H1 (cell line): ENCODE measurements at regions of chr6 and their contacts with region 1.

Region 1: GRCh38 chr6:24547243-24547642 is 52.5 kb downstream of the ALDH5A1 start:
- DNase-seq: peak; percentile 31 to 54
- H3K4me3 ChIP-seq: no peak overlapping the region
- H3K27ac ChIP-seq: no peak overlapping the region
- H3K4me1 ChIP-seq: no peaks in the 10 kb centered on the region
- H3K27me3 ChIP-seq: no peaks in the 10 kb centered on the region
- CTCF ChIP-seq: peak; percentile 39 to 50 (median 46); a peak in 3 of 4 replicates
- EP300 ChIP-seq: no peak
- POLR2A ChIP-seq: no peak
- RAD21 ChIP-seq: peak; percentile 62 to 73

Region 2: GRCh38 chr6:23633986-23634385 is 913.3 kb before region 1 on chr6:
- CTCF ChIA-PET with region 1: no interaction called
- POLR2A ChIA-PET with region 1: no interaction called
- DNase-seq: no peak
- H3K4me3 ChIP-seq: no peak overlapping the region
- H3K27ac ChIP-seq: no peak overlapping the region
- H3K4me1 ChIP-seq: no peaks in the 10 kb centered on the region
- H3K27me3 ChIP-seq: peaks cover 0 to 2% (median 0%) of the 10 kb centered on the region in 4 experiments; a peak in 1 of 7 replicates
- CTCF ChIP-seq: no peak
- EP300 ChIP-seq: no peak
- POLR2A ChIP-seq: no peak
- RAD21 ChIP-seq: no peak

Region 3: DNA sequence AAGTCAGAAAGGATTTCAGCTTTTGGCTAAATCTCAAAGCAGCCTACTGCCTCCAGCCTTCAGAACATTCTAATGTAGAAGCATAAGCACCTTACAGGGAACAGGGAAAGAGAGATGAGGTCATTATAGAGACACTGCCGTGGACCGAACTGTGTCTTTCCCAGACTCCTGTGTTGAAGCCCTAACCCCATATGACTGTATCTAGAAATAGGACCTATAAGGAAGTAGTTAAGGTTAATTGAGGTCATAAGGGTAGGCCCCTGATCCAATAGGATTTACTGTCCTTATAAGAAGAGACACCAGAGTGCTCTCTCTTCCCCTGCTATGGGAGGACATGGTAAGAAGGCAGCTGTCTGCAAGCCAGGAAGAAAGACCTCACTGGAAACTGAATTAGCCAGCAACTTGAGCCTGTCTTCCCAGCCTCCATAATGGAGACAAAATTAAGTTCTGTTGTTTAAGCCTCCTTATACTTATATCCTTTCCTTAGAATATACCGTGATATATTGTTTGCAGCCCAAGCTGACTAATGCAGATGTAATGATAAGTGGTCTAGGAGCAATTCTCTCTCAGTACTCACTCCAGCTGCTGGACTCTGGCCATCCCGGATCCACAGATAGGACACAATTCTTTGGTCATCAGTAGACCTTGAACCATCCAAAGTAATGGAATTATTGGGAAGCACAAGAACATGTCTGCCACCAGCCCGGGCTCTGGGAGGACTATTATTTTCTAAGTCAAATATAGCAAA is 19.0 kb after region 1 on chr6:
- CTCF ChIA-PET with region 1: interaction called, 14 read pairs
- POLR2A ChIA-PET with region 1: no interaction called
- DNase-seq: no peak
- H3K4me3 ChIP-seq: no peak overlapping the region
- H3K27ac ChIP-seq: no peak overlapping the region
- H3K4me1 ChIP-seq: no peaks in the 10 kb centered on the region
- H3K27me3 ChIP-seq: no peaks in the 10 kb centered on the region
- CTCF ChIP-seq: no peak
- EP300 ChIP-seq: no peak
- POLR2A ChIP-seq: no peak
- RAD21 ChIP-seq: no peak